ENCODE measurements at regions of chr18 and their contacts with region 1.

Region 1: GRCh38 chr18:77207540-77207939 is 42.1 kb upstream of the GALR1 start:
- DNase-seq: peak; percentile 64
- H3K4me3 ChIP-seq: no peak overlapping the region
- H3K27ac ChIP-seq: no peak overlapping the region
- H3K4me1 ChIP-seq: no peaks in the 10 kb centered on the region; a peak in 1 of 4 replicates
- H3K27me3 ChIP-seq: no peaks in the 10 kb centered on the region
- CTCF ChIP-seq: peak; percentile 63
- EP300 ChIP-seq: no peak
- RAD21 ChIP-seq: no peak

Region 2: DNA sequence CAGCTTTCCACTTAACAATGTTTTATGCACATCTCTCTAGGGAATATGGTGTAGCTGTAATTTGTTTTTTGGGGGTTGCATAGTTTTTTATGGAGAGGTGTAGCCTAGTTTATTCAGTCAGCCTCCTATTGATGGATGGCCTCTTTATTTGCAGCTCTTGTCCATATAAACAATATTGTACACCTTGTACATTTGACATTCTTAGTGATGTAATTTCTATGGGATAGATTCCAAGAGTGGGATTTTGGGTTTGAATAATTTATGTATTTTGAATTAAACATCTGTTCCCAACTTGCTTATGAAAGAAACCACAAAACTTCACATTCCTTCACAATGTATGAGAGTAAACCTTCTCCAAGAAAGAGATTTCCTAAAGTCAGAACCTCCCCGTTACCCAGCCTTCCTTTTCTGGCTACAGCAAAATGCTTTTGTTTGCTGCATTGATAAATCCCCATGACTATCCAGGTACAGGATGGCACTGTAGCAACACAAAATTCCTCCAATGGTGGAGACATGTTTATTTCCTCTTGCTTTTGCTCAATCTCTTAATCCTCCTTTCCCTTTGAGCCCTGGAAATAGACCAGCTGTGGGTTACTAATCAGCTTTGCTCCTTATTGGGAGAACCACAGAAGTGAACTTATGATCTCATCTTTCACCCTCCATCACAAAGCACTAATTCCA is 16.3 kb before region 1 on chr18:
- CTCF ChIA-PET with region 1: interaction called, 11 read pairs
- POLR2A ChIA-PET with region 1: no interaction called
- DNase-seq: no peak
- H3K4me3 ChIP-seq: no peak overlapping the region
- H3K27ac ChIP-seq: no peak overlapping the region
- H3K4me1 ChIP-seq: no peaks in the 10 kb centered on the region
- H3K27me3 ChIP-seq: no peaks in the 10 kb centered on the region
- CTCF ChIP-seq: no peak
- EP300 ChIP-seq: no peak
- RAD21 ChIP-seq: no peak

Measured in SK-N-SH (cell line).